ENCODE measurements at regions of chr16 and their contacts with region 1.

Region 1: DNA sequence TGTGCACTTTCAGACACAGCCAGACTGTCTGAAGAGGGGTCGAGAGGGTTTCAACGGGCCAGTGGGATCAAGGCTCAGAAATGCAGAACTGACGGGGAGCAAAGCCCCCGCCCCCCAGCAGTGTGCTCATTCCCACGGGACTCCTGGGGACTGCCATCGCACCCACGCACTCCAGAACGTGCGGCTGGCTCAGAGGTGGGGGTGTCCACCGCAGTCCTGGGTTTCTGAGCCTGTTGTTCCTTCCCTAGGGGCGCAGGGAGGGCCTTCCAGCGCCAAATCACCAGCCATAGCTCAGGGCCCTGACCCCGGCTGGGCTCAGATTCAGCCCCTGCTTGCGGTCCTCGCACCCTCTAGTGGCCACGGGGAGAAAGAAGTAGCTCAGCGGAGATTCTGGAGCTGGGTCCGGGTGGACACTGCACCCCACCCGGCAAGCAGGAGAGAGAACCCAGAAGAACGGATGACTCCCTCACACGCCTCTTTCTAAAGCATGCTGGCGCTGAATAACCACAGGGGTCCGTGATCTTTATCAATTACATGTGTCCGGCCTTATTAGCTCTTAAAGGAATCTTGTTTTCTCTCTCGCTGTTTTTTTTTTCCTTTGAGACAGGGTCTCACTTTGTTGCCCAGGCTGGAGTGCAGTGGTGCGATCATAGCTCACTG is 45.0 kb upstream of the USP7 start:
- DNase-seq: peak; percentile 53 to 77
- ATAC-seq: peak; percentile 83 to 99 (median 98)
- H3K4me3 ChIP-seq: no peak overlapping the region
- H3K4me3 Mint-ChIP-seq: no peak overlapping the region
- H3K27ac ChIP-seq: no peak overlapping the region
- H3K27ac Mint-ChIP-seq: no peak overlapping the region
- H3K4me1 ChIP-seq: peaks cover 8% of the 10 kb centered on the region
- H3K4me1 Mint-ChIP-seq: peaks cover 0 to 7% of the 10 kb centered on the region in 2 donors
- H3K27me3 ChIP-seq: no peaks in the 10 kb centered on the region
- H3K27me3 Mint-ChIP-seq: peaks cover 0 to 12% of the 10 kb centered on the region in 2 donors
- CTCF ChIP-seq: peak; percentile 79

Region 2: GRCh38 chr16:8720080-8720966 is 288.4 kb before region 1 on chr16:
- intact Hi-C with region 1: no loop called
- DNase-seq: no peak
- ATAC-seq: no peak
- H3K4me3 ChIP-seq: no peak overlapping the region
- H3K4me3 Mint-ChIP-seq: no peak overlapping the region
- H3K27ac ChIP-seq: no peak overlapping the region
- H3K27ac Mint-ChIP-seq: no peak overlapping the region
- H3K4me1 ChIP-seq: no peaks in the 10 kb centered on the region
- H3K4me1 Mint-ChIP-seq: no peaks in the 10 kb centered on the region
- H3K27me3 ChIP-seq: no peaks in the 10 kb centered on the region
- H3K27me3 Mint-ChIP-seq: no peaks in the 10 kb centered on the region
- CTCF ChIP-seq: no peak

Region 3: DNA sequence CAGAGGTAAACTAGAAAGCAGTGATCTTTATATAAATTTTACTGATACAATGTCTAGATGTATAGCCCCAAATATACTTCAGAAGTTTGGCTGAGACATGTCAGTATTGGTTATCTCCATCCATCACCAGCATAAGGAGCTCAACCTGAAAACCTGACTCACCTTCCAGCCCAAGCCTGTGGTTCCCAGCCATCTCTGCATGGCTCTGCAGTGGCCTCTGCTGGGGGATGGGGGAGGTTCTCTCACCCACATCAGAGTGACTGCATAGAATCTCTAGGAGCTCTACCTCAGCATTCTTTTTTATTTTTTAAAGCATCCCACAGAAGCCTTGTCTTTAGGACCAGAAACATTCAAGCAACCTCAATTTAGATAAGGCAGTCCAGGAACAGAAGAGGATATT is 72.3 kb before region 1 on chr16:
- intact Hi-C with region 1: loop called (anchors 1 kb)
- DNase-seq: peak; percentile 46 to 82
- ATAC-seq: peak; percentile 87 to 93 (median 89)
- H3K4me3 ChIP-seq: no peak overlapping the region
- H3K4me3 Mint-ChIP-seq: peak overlapping the region; percentile 56
- H3K27ac ChIP-seq: no peak overlapping the region
- H3K27ac Mint-ChIP-seq: peak overlapping the region; percentile 69 to 72
- H3K4me1 ChIP-seq: peaks cover 45% of the 10 kb centered on the region
- H3K4me1 Mint-ChIP-seq: peaks cover 86 to 95% of the 10 kb centered on the region in 2 donors
- H3K27me3 ChIP-seq: no peaks in the 10 kb centered on the region
- H3K27me3 Mint-ChIP-seq: no peaks in the 10 kb centered on the region
- CTCF ChIP-seq: peak; percentile 65

Measured in natural killer cell (primary cell).